ENCODE measurements at regions of chr17 and their contacts with region 1.

Region 1: GRCh38 chr17:58249270-58250133 is 11.1 kb downstream of the LPO start:
- DNase-seq: peak; percentile 80
- ATAC-seq: peak; percentile 96
- H3K4me3 Mint-ChIP-seq: peak overlapping the region; percentile 84
- H3K27ac Mint-ChIP-seq: no peak overlapping the region
- H3K4me1 Mint-ChIP-seq: peaks cover 14% of the 10 kb centered on the region
- H3K27me3 Mint-ChIP-seq: peaks cover 4% of the 10 kb centered on the region
- CTCF ChIP-seq: peak; percentile 71

Region 2: DNA sequence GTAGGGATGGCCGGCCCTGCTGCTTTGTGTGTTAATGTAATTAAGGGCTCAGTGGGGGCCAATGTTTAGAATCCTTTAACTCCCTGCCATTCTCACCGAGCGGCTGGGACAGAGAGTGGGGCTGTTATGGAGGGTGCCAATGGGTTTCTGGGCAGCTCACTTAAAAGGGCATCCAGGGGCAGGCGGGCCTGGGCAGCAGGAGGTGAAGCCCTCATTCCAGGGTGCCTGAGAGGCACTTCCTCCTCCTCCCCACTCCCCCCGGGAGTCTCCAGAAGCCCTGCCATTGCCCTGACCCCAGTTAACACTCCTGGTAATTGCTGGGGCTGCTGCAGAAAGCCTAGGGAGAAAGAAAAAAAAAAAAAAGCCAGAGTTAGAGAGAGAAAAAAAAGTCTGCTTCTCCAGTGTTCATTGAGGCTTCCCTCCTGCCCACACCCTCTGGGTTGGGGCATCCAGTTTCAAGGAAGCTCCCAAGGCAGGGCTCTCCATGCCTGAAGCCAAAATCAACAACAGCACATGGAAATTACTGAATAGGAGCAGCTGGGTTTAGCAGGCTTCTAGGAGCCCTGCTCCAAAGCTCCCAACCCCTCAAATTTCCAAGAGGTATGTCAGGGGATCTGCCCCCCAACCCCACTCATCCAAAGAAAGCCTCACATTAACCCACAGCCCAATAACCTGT is 322.3 kb before region 1 on chr17:
- CTCF ChIA-PET with region 1: no interaction called
- POLR2A ChIA-PET with region 1: no interaction called
- intact Hi-C with region 1: no loop called
- DNase-seq: no peak
- ATAC-seq: no peak
- H3K4me3 Mint-ChIP-seq: no peak overlapping the region
- H3K27ac Mint-ChIP-seq: peak overlapping the region; percentile 12
- H3K4me1 Mint-ChIP-seq: no peaks in the 10 kb centered on the region
- H3K27me3 Mint-ChIP-seq: peaks cover 46% of the 10 kb centered on the region
- CTCF ChIP-seq: no peak

Region 3: GRCh38 chr17:58200017-58200633 is 49.4 kb before region 1 on chr17:
- CTCF ChIA-PET with region 1: interaction called, 35 read pairs
- POLR2A ChIA-PET with region 1: interaction called, 3 read pairs
- intact Hi-C with region 1: loop called (anchors 1 kb)
- DNase-seq: peak; percentile 35
- ATAC-seq: peak; percentile 82
- H3K4me3 Mint-ChIP-seq: no peak overlapping the region
- H3K27ac Mint-ChIP-seq: no peak overlapping the region
- H3K4me1 Mint-ChIP-seq: peaks cover 2% of the 10 kb centered on the region
- H3K27me3 Mint-ChIP-seq: peaks cover 27% of the 10 kb centered on the region
- CTCF ChIP-seq: no peak

Region 4: GRCh38 chr17:58232707-58233156 is 16.8 kb before region 1 on chr17:
- CTCF ChIA-PET with region 1: interaction called, 23 read pairs
- POLR2A ChIA-PET with region 1: interaction called, 9 read pairs
- intact Hi-C with region 1: loop called (anchors 1 kb)
- DNase-seq: peak; percentile 29
- ATAC-seq: peak; percentile 76
- H3K4me3 Mint-ChIP-seq: peak overlapping the region; percentile 51
- H3K27ac Mint-ChIP-seq: peak overlapping the region; percentile 90
- H3K4me1 Mint-ChIP-seq: peaks cover 30% of the 10 kb centered on the region
- H3K27me3 Mint-ChIP-seq: peaks cover 2% of the 10 kb centered on the region
- CTCF ChIP-seq: no peak

Region 5: GRCh38 chr17:58303971-58304725 is 54.6 kb after region 1 on chr17:
- CTCF ChIA-PET with region 1: no interaction called
- POLR2A ChIA-PET with region 1: no interaction called
- intact Hi-C with region 1: loop called (anchors 5 kb)
- DNase-seq: no peak
- ATAC-seq: peak; percentile 96
- H3K4me3 Mint-ChIP-seq: no peak overlapping the region
- H3K27ac Mint-ChIP-seq: no peak overlapping the region
- H3K4me1 Mint-ChIP-seq: peaks cover 7% of the 10 kb centered on the region
- H3K27me3 Mint-ChIP-seq: no peaks in the 10 kb centered on the region
- CTCF ChIP-seq: peak; percentile 32

Region 6: GRCh38 chr17:58447039-58447975 is 197.8 kb after region 1 on chr17:
- CTCF ChIA-PET with region 1: interaction called, 3 read pairs
- POLR2A ChIA-PET with region 1: no interaction called
- intact Hi-C with region 1: loop called (anchors 1 kb)
- DNase-seq: peak; percentile 43
- ATAC-seq: peak; percentile 93
- H3K4me3 Mint-ChIP-seq: no peak overlapping the region
- H3K27ac Mint-ChIP-seq: no peak overlapping the region
- H3K4me1 Mint-ChIP-seq: peaks cover 11% of the 10 kb centered on the region
- H3K27me3 Mint-ChIP-seq: no peaks in the 10 kb centered on the region
- CTCF ChIP-seq: no peak

Region 7: DNA sequence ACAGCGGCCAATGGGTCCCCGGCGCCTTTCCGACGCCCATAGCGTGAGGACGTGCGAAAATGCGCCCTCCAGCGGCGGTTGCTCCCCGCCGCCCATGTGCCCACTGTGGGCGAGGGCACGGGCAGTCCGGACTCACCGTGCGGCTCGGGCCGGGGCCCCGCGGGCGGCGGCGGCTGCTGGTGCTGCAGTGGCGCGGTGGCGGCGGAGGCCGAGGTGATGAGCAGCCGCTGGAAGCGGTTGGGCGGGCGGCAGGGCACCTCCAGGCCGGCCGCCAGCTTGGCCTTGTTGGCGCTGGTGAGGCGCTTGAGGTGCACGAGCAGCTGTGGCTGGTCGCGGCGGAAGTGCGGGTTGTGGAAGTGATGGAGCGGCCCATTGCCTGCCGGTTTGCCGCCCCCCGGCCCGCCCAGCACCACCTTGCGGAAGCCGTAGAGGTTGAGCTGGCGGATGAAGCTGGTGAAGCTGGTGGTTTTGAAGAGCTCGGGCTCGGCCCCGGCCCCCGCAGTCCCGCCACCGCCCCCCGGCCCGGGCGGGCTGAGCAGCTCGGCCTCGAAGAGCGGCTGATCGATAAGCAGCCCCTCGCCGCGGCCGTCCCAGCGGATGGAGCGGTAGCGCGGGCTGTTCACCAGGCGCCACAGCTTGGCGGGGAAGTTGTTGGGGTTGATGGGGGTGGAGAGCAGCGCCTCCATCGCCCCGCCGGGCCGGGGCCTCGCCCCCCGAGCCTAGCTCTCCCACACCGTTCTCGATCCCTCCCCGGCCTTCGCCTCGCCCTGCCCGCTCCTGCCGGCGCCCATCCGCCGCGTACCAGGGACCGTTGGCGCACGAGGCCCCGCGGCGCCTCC is 238.3 kb after region 1 on chr17 and contains the start of gene HSF5:
- CTCF ChIA-PET with region 1: interaction called, 7 read pairs
- POLR2A ChIA-PET with region 1: no interaction called
- intact Hi-C with region 1: loop called (anchors 1 kb)
- DNase-seq: peak; percentile 79
- ATAC-seq: peak; percentile 96
- H3K4me3 Mint-ChIP-seq: peak within 1 kb of the TSS; percentile 69
- H3K27ac Mint-ChIP-seq: peak within 1 kb of the TSS; percentile 66
- H3K4me1 Mint-ChIP-seq: peaks cover 19% of the 10 kb centered on the region
- H3K27me3 Mint-ChIP-seq: no peaks in the 10 kb centered on the region
- CTCF ChIP-seq: no peak
- total RNA-seq, gene HSF5: 4.5 and 5.5 TPM in 2 replicates

Region 8: DNA sequence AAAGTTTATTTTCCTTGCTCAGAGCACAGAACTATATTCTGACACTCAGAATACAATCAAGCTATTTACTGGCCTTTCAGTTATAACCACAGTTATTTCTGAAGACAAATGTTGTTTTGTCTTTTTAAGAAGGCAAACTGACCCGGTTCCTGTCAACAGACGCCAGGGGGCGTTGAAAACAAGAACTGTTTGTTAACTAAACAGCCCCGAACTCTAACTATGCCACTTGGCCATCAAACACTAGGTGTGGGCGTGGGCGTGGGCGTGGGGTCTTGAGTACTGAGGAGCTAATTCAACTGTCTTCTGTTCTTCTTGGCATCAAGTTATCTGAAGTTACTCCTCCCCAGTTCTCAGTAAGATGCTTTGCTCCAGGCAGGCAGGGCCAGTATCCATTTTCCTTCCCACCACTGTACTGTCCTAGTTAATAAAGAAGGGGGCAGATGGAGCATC is 328.2 kb after region 1 on chr17:
- CTCF ChIA-PET with region 1: no interaction called
- POLR2A ChIA-PET with region 1: no interaction called
- intact Hi-C with region 1: no loop called
- DNase-seq: peak; percentile 17
- ATAC-seq: no peak
- H3K4me3 Mint-ChIP-seq: no peak overlapping the region
- H3K27ac Mint-ChIP-seq: no peak overlapping the region
- H3K4me1 Mint-ChIP-seq: no peaks in the 10 kb centered on the region
- H3K27me3 Mint-ChIP-seq: no peaks in the 10 kb centered on the region
- CTCF ChIP-seq: no peak

Measured in activated B cell treated with CpG ODN at 0.5 μM for 24 hours (primary cell).